ENCODE measurements at regions of chr6 and their contacts with region 1.

Region 1: GRCh38 chr6:108052706-108053105 is 21.8 kb downstream of the OSTM1 start:
- DNase-seq: no peak
- H3K4me3 ChIP-seq: no peak overlapping the region
- H3K27ac ChIP-seq: no peak overlapping the region
- H3K4me1 ChIP-seq: no peaks in the 10 kb centered on the region
- CTCF ChIP-seq: no peak

Region 2: DNA sequence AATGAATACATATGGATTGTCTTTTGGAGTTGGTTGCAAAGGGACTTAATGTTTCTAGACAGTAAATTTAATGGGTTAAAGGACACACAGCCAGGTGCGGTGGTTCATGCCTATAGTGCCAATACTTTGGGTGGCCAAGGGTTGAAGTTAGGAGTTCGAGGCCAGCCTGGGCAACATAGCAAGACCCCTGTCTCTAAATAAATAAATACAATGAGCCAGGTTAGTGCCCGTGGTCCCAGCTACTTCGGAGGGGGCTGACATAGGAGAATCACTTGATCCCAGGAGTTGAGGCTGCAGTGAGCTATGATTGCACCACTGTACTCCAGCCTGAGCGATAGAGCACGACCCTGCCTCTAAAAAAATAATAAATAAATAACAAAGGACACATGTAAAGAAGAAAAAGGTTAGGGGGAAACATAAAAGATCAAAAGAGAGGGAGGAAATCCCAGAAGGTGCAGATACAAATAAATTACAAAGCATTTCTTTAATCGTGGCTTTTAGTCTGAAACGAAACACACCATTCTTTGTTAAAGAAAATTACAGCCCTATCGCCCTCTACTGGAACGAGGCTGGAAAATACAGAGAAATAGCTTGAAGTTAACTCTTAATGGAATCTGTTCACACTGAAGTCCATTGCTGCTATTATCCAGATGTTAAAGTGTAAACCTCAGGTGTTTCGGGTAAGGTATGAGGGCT is 186.0 kb before region 1 on chr6:
- CTCF ChIA-PET with region 1: no interaction called
- POLR2A ChIA-PET with region 1: no interaction called
- intact Hi-C with region 1: loop called (anchors 5 kb)
- DNase-seq: peak; percentile 57
- H3K4me3 ChIP-seq: no peak overlapping the region
- H3K27ac ChIP-seq: no peak overlapping the region
- H3K4me1 ChIP-seq: peaks cover 13% of the 10 kb centered on the region
- CTCF ChIP-seq: peak; percentile 85

Region 3: GRCh38 chr6:107977283-107977682 is 75.4 kb before region 1 on chr6:
- CTCF ChIA-PET with region 1: no interaction called
- POLR2A ChIA-PET with region 1: interaction called, 8 read pairs
- intact Hi-C with region 1: loop called (anchors 1 kb)
- DNase-seq: peak; percentile 28
- H3K4me3 ChIP-seq: no peak overlapping the region
- H3K27ac ChIP-seq: no peak overlapping the region
- H3K4me1 ChIP-seq: no peaks in the 10 kb centered on the region
- CTCF ChIP-seq: peak; percentile 72

Region 4: GRCh38 chr6:108097882-108098281 is 45.2 kb after region 1 on chr6:
- CTCF ChIA-PET with region 1: no interaction called
- POLR2A ChIA-PET with region 1: no interaction called
- intact Hi-C with region 1: no loop called
- DNase-seq: no peak
- H3K4me3 ChIP-seq: no peak overlapping the region
- H3K27ac ChIP-seq: no peak overlapping the region
- H3K4me1 ChIP-seq: no peaks in the 10 kb centered on the region
- CTCF ChIP-seq: no peak